Activated naive CD4-positive, alpha-beta T cell treated with anti-CD3 and anti-CD28 coated beads, Interleukin-2, amount 10 ng/mL, durations not matched to agents 7 days and 5 days (primary cell): ENCODE measurements at regions of chr21 and their contacts with region 1.

Region 1: DNA sequence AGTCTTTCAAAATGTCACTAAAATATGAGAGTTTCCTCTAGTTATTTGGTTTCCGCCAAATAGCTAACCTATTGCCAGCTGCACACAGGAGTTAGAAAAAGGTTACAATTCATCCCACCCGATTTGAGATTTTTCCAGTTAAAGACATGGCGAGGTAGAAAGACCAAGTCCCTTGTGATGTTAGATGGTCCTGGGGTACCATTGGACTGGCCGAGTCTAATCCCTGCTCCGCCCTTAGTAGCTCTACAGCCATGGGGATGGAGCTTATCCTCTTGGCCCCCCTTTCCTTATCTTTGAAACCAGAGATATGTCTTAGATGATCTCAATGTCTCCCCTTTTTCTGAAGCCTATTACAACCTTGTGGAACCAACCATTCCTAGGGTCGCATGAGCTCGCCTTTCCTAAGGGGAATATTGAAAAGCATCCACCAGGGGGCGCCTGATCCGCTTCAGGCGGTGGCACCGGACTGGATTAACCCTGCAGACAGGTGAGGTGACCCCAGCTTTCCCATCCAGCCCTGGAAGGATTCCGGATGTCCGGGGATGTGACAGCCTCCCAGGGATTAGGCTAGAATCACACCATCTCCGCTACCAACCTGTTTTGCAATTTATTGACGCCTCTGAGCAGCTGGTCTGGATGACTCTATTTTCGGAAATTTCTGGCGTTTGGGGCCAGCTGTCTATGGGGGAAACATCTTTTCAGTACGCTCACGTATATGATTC is 68.3 kb upstream of the SIM2 start:
- DNase-seq: peak; percentile 69
- H3K4me3 Mint-ChIP-seq: no peak overlapping the region
- H3K27ac Mint-ChIP-seq: no peak overlapping the region
- H3K4me1 Mint-ChIP-seq: no peaks in the 10 kb centered on the region
- H3K27me3 Mint-ChIP-seq: peaks cover 5% of the 10 kb centered on the region

Region 2: GRCh38 chr21:36854391-36854790 is 223.7 kb after region 1 on chr21:
- CTCF ChIA-PET with region 1: interaction called, 13 read pairs
- DNase-seq: peak; percentile 27
- H3K4me3 Mint-ChIP-seq: no peak overlapping the region
- H3K27ac Mint-ChIP-seq: no peak overlapping the region
- H3K4me1 Mint-ChIP-seq: peaks cover 11% of the 10 kb centered on the region
- H3K27me3 Mint-ChIP-seq: no peaks in the 10 kb centered on the region

Region 3: GRCh38 chr21:36927719-36928117 is 297.1 kb after region 1 on chr21:
- CTCF ChIA-PET with region 1: interaction called, 26 read pairs
- DNase-seq: peak; percentile 85
- H3K4me3 Mint-ChIP-seq: no peak overlapping the region
- H3K27ac Mint-ChIP-seq: no peak overlapping the region
- H3K4me1 Mint-ChIP-seq: no peaks in the 10 kb centered on the region
- H3K27me3 Mint-ChIP-seq: no peaks in the 10 kb centered on the region